Ovary (tissue), 10 donors: ENCODE measurements at regions of chr2 and their contacts with region 1.

Region 1: DNA sequence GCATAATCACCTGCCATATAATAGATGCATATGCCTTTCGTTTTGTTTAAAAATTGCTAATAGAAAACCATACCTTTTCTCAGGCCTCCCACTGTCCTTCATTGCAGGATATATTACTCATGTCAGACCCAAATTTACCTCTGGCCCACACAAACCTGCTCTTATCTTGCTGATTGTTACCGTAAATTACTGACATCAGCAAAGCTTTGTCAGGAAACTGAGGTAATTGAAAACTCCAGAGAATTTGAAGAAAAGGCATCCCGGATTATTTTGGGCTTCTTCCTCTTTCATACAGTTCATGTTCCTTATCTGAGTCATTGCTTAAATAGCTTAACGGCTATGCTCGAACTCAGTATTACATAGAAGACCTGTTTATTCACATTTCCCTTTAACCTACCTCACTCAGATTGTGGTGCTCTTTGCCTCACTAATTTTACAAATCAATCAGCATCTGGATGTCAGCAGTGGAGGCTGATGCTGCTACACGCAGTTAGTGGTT is 145.7 kb downstream of the ZEB2 start:
- DNase-seq: no peak
- H3K4me3 ChIP-seq: no peak overlapping the region
- H3K27ac ChIP-seq: no peak overlapping the region
- H3K4me1 ChIP-seq: peaks cover 9% of the 10 kb centered on the region
- H3K27me3 ChIP-seq: no peaks in the 10 kb centered on the region
- CTCF ChIP-seq: no peak
- EP300 ChIP-seq: no peak
- POLR2A ChIP-seq: no peak

Region 2: DNA sequence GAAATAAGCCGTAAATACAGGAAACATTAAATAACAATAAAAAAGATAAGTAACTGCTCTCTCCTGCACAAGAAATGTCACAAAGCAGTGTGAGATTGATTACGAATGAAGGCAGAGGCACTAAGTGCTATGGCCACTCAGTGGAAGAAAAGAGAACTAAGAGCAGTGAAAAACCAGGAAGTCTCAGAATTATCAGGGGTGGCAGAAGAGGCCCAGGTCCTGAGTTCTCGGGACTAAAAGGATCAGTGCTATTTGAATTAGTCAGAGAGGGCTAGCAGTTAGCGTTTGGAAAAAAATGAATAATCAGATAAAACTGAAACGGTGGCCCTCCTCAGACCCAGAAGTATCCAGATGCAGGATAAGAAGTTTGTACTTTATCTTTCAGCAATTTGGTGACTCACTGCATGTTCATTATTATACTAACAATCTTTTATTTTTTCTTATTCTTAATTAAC is 221.4 kb before region 1 on chr2:
- intact Hi-C with region 1: loop called in 1 of 4 experiments (anchors 5 kb)
- DNase-seq: no peak
- H3K4me3 ChIP-seq: no peak overlapping the region
- H3K27ac ChIP-seq: no peak overlapping the region
- H3K4me1 ChIP-seq: peaks cover 2% of the 10 kb centered on the region
- H3K27me3 ChIP-seq: no peaks in the 10 kb centered on the region
- CTCF ChIP-seq: no peak
- EP300 ChIP-seq: no peak
- POLR2A ChIP-seq: no peak